ENCODE measurements at regions of chr5 and their contacts with region 1.

Region 1: DNA sequence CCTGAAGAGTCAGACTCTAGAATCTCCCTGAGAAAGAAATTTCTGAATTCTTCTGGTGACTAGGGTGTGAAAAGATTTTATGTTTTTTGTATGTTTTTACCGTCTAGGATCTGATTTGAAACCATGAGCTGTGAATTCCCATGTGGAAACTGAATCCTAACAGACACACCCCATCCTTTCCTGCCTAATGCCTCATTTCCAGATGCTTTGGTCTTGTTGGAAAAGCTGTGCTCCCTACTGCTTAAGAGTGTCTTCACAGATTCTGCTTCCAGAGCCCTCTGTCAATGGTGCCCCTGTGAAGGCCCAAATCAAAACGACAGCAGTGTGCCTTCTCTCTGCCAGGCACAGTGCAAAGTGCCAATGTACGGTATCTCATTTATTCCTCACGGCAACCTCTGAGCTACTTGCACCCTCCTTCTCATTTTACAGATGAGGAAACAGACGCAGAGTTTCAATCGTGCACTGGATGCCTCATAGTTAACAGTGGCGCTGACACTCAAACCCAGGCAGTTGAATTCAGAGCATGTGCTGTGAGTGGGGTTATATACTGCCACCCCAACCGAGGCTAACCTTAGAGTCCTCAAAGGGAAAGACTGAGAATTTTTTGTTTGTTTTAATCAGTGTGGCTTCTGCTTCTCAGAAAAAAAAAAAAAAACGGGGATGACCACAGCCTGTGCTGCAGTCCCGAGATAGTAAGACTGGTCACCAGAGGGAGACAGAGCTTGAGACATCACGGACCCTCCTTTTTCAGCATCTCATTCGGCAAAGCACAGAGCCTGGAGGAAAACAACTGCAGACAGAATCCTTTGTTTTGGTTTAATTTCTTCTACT is 188.4 kb downstream of the SNCAIP start:
- DNase-seq: peak in 6 of 10 donors; percentile 8 to 68 (median 50)
- H3K4me3 ChIP-seq: peak overlapping the region in 6 of 59 donors; percentile 9 to 32 (median 14)
- H3K27ac ChIP-seq: peak overlapping the region in 2 of 59 donors; percentile 3 to 14
- H3K27me3 ChIP-seq: no peaks in the 10 kb centered on the region
- CTCF ChIP-seq: peak in 54 of 56 donors; percentile 9 to 84 (median 68)

Region 2: GRCh38 chr5:122192497-122193496 is 307.7 kb before region 1 on chr5:
- intact Hi-C with region 1: loop called (anchors 2 to 10 kb)
- DNase-seq: peak in 2 of 10 donors; percentile 15 to 47
- H3K4me3 ChIP-seq: peak overlapping the region in 8 of 59 donors; percentile 3 to 47 (median 32)
- H3K27ac ChIP-seq: no peak overlapping the region
- H3K27me3 ChIP-seq: no peaks in the 10 kb centered on the region
- CTCF ChIP-seq: peak; percentile 58 to 85 (median 71)

Region 3: GRCh38 chr5:122295138-122295537 is 205.3 kb before region 1 on chr5:
- intact Hi-C with region 1: loop called in 1 of 2 experiments (anchors 10 kb)
- DNase-seq: no peak
- H3K4me3 ChIP-seq: no peak overlapping the region
- H3K27ac ChIP-seq: no peak overlapping the region
- H3K27me3 ChIP-seq: no peaks in the 10 kb centered on the region
- CTCF ChIP-seq: peak in 46 of 56 donors; percentile 8 to 59 (median 38)

Region 4: GRCh38 chr5:122541388-122541787 is 40.9 kb after region 1 on chr5:
- intact Hi-C with region 1: no loop called
- DNase-seq: no peak
- H3K4me3 ChIP-seq: no peak overlapping the region
- H3K27ac ChIP-seq: no peak overlapping the region
- H3K27me3 ChIP-seq: peaks cover 0 to 63% (median 9%) of the 10 kb centered on the region in 45 donors
- CTCF ChIP-seq: no peak

Region 5: GRCh38 chr5:122565331-122565730 is 64.9 kb after region 1 on chr5:
- intact Hi-C with region 1: no loop called
- DNase-seq: no peak
- H3K4me3 ChIP-seq: no peak overlapping the region
- H3K27ac ChIP-seq: no peak overlapping the region
- H3K27me3 ChIP-seq: peaks cover 0 to 4% (median 0%) of the 10 kb centered on the region in 45 donors
- CTCF ChIP-seq: no peak

Region 6: DNA sequence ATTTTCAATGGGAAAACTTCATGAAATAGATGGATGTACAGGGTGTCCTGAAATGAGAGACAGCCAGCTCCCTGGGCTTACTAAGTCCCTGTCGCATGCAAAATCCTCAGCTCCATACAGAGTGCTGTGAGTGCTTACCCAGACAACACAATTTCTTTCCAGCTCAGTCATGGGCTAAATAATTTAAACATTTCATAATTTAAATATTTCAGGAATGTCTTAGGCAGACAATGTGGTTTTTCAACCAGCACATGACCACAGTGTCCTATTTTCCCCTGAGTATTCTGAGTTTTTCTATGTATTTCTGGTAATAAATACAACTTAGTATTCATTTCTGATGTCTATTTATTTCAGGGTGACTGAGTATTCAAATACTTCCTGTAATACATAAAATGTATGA is 85.9 kb after region 1 on chr5:
- intact Hi-C with region 1: no loop called
- DNase-seq: no peak
- H3K4me3 ChIP-seq: no peak overlapping the region
- H3K27ac ChIP-seq: no peak overlapping the region
- H3K27me3 ChIP-seq: peaks cover 0 to 14% (median 0%) of the 10 kb centered on the region in 45 donors
- CTCF ChIP-seq: no peak

Region 7: GRCh38 chr5:122816756-122817155 is 316.3 kb after region 1 on chr5:
- intact Hi-C with region 1: loop called in 1 of 2 experiments (anchors 10 kb)
- DNase-seq: no peak
- H3K4me3 ChIP-seq: no peak overlapping the region
- H3K27ac ChIP-seq: no peak overlapping the region
- H3K27me3 ChIP-seq: no peaks in the 10 kb centered on the region
- CTCF ChIP-seq: no peak

Region 8: DNA sequence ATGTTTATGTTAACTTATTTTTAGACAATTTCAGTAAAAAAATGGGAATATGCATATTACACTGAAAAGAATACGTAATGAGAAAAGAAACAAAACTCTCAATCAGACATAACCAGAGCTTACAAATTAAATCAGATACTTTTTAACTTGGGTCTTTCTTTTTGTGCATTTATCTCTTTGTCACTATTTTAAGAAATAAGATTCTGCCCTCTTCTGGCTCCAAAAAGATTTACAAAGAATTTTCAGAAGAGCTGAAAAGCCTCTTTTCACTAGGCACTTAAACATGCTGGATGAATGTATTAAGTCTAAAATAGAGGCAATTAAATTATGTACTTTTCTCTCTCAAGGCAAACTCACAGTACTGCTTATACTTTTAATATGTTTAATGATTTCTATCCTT is 867.3 kb after region 1 on chr5:
- intact Hi-C with region 1: loop called in 1 of 2 experiments (anchors 2 kb)
- DNase-seq: no peak
- H3K4me3 ChIP-seq: no peak overlapping the region
- H3K27ac ChIP-seq: no peak overlapping the region
- H3K27me3 ChIP-seq: no peaks in the 10 kb centered on the region
- CTCF ChIP-seq: peak in 48 of 56 donors; percentile 11 to 69 (median 40)

Region 9: GRCh38 chr5:123610665-123611405 is 1110.4 kb after region 1 on chr5:
- intact Hi-C with region 1: loop called in 1 of 2 experiments (anchors 10 kb)
- DNase-seq: peak in 1 of 10 donors; percentile 13
- H3K4me3 ChIP-seq: no peak overlapping the region
- H3K27ac ChIP-seq: peak overlapping the region in 1 of 59 donors; percentile 16
- H3K27me3 ChIP-seq: no peaks in the 10 kb centered on the region
- CTCF ChIP-seq: peak; percentile 85 to 99 (median 95)

Measured in dorsolateral prefrontal cortex (tissue), 120 donors.